ENCODE measurements at regions of chr16 and their contacts with region 1.

Region 1: GRCh38 chr16:21708533-21709115 is 44.9 kb downstream of the OTOA start:
- DNase-seq: peak; percentile 13
- H3K4me3 ChIP-seq: no peak overlapping the region
- H3K27ac ChIP-seq: no peak overlapping the region
- H3K27me3 ChIP-seq: peaks cover 5% of the 10 kb centered on the region
- CTCF ChIP-seq: peak; percentile 87

Region 2: DNA sequence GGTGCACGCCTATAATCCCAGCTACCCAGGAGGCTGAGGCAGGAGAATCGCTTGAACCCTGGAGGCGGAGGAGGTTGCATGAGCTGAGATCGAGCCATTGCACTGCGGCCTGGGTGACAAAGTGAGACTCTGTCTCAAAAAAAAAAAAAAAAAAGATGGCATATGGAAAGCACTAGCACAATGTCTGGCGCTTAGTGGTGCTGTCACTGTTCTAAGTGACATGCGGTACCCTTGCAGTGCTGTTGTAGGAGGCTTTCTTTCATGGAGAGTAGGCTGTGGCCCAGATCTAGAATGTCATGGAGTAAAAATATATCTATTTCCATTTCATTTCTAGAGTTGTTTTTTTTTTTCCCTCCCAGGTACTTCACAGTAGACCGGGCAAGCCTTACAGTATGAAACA is 123.8 kb before region 1 on chr16:
- CTCF ChIA-PET with region 1: interaction called, 32 read pairs
- POLR2A ChIA-PET with region 1: no interaction called
- DNase-seq: no peak
- H3K4me3 ChIP-seq: no peak overlapping the region
- H3K27ac ChIP-seq: no peak overlapping the region
- H3K27me3 ChIP-seq: peaks cover 3% of the 10 kb centered on the region
- CTCF ChIP-seq: no peak

Region 3: DNA sequence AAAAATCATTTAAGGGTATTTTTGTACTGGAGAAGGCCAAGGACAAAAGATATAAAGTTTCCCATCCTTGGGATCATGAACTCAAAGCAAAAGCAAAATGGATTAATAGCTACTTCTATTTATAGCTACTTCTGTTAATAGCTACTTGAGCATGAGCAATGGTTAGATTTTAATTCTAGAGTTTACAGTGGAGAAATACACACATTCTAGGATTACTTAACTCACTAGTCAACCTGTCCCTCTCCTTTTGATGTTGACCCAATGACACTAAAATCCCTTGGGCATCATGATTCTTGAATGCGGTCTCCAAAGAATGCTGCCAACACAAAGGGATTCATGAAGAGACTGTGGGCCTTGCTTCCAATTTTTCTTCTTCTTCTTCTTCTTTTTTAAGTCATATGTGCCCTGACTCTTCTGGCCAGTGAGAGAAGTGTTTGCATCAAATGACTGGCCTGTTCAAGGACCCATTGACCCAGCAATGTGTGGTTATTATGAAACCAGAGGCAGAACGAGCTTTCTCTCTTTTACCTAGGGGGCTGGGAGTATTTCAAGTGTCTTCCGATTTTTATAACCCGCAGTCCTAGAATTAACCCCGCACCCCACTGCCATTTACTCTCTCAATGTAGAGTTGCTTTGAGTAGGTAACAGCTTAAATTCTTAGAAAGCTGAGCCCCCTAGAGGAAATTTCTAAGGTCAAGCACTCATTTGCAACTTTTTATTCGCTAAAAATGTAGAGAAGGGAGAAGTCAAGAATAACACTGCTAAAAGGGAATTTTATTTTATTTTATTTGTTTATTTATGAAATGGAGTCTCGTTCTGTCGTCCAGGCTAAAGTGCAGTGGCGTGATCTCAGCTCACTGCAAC is 10.2 kb before region 1 on chr16:
- CTCF ChIA-PET with region 1: interaction called, 11 read pairs
- POLR2A ChIA-PET with region 1: no interaction called
- DNase-seq: no peak
- H3K4me3 ChIP-seq: no peak overlapping the region
- H3K27ac ChIP-seq: no peak overlapping the region
- H3K27me3 ChIP-seq: peaks cover 7% of the 10 kb centered on the region
- CTCF ChIP-seq: no peak

Region 4: DNA sequence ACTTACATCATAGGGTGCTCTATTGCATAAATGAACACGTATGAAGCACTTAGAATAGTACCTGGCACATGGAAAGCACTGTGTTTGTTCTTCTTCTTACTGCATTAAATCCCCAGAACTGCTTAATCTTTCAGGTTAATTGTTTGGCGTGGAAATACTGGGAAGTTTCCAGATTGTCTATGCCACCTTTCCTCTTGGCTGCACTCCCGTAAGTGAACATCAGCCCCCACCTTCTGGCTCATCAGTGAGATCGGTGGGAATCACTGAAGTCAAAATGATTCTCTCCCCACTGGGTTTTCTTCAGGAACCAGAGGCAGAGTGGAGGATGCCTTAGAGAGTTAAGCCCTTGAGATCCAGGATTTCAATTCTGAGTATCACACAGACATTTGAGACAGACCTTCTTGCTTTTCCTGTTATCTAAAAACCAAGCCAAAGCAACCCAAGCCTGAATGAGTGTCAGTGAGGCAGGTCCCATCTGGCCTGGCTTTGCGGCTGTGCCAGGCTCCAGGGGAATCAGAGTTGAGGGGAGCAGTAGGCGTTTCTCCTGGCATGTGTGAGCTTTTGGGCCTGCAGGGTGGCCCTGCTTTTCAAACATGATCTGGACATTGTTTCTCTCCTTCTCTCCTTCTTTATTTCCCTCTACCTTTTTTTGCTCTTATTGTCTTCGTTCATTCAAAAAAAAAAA is 14.3 kb after region 1 on chr16:
- CTCF ChIA-PET with region 1: interaction called, 11 read pairs
- POLR2A ChIA-PET with region 1: no interaction called
- DNase-seq: no peak
- H3K4me3 ChIP-seq: no peak overlapping the region
- H3K27ac ChIP-seq: no peak overlapping the region
- H3K27me3 ChIP-seq: peaks cover 6% of the 10 kb centered on the region
- CTCF ChIP-seq: no peak